T-cell (primary cell): ENCODE measurements at regions of chr3 and their contacts with region 1.

Region 1: DNA sequence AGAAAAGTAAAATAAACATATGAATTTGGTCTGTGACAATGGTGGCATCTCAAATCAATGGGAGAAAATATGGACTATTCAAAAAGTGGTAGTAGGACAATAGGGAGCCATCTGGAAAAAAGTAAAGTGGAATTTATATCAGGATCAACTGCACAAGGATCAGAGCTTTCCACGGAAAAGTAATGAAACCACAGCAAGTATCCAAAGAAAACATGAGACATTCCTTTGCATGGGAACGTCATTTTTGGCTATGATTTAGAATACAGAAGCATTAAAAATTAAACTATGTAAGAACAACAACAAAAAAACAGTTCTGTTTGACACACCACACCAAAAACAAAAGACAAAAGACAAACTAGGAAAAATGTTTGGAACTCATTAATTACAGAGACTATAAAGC is 18.7 kb downstream of the CRBN start:
- DNase-seq: no peak
- ATAC-seq: no peak
- H3K4me3 ChIP-seq: no peak overlapping the region
- H3K4me3 Mint-ChIP-seq: no peak overlapping the region
- H3K27ac ChIP-seq: no peak overlapping the region
- H3K27ac Mint-ChIP-seq: peak overlapping the region; percentile 70 to 83
- H3K4me1 ChIP-seq: peaks cover 0 to 6% of the 10 kb centered on the region in 2 experiments
- H3K4me1 Mint-ChIP-seq: peaks cover 73 to 78% (median 75%) of the 10 kb centered on the region in 3 donors
- H3K27me3 ChIP-seq: no peaks in the 10 kb centered on the region
- H3K27me3 Mint-ChIP-seq: no peaks in the 10 kb centered on the region

Region 2: DNA sequence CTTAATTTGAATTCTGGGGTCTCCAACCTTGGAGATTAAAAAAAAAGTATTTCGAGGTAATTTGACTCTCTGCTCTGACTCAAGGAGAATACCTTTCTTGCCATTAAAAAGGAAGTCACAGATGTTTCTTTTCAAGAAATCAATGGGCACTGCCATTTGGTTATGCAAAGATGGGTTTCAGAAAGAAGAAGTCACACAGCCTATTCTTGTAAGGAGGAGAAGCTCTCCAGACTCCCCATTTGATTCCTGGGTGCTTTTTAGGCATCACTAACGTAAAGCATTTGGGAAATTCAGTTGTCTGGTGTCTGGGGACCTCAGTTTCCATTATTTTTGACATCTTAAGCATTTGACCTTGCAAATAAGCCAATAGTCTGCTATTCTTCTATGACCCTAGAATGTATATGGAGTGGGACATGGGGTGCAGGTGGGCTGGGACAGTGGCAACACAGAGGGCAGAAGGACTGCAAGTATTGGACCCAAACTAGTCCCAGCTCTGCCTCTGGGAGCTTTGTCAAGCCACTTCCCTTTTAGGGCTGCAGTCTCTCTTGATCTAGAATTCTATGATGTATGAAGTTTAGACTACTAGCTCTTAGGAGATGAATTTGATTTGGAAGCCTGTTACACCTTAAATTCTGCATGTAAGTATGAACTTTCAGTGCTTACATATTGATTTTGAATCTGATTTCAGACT is 78.4 kb before region 1 on chr3:
- CTCF ChIA-PET with region 1: no interaction called
- POLR2A ChIA-PET with region 1: no interaction called
- DNase-seq: no peak
- ATAC-seq: no peak
- H3K4me3 ChIP-seq: no peak overlapping the region
- H3K4me3 Mint-ChIP-seq: no peak overlapping the region
- H3K27ac ChIP-seq: no peak overlapping the region
- H3K27ac Mint-ChIP-seq: no peak overlapping the region
- H3K4me1 ChIP-seq: no peaks in the 10 kb centered on the region
- H3K4me1 Mint-ChIP-seq: no peaks in the 10 kb centered on the region
- H3K27me3 ChIP-seq: no peaks in the 10 kb centered on the region
- H3K27me3 Mint-ChIP-seq: peaks cover 2 to 4% of the 10 kb centered on the region in 2 donors

Region 3: DNA sequence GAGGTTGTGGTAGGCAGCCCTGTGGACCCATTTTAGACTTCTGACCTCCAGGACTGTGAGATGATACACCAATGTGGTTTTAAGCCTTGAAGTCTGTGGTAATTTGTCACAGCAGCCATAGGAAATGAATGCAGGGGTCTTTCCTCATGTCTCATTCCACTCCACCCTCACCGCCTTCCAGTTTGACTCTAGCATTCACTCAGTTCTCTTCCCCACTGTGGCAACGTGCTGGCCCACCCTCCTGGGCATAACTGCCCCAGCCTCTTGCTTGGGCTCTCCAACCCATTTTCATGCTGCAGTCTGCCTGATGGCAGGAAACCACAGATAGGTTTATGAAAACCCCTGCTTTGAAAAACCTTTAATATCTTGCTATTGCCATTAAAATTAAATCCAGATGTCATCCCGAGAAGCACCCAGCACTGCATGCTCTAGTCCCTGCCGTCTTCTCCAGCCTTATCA is 41.4 kb before region 1 on chr3:
- CTCF ChIA-PET with region 1: no interaction called
- POLR2A ChIA-PET with region 1: interaction called in 1 of 2 experiments, 12 read pairs
- DNase-seq: no peak
- ATAC-seq: no peak
- H3K4me3 ChIP-seq: no peak overlapping the region
- H3K4me3 Mint-ChIP-seq: no peak overlapping the region
- H3K27ac ChIP-seq: no peak overlapping the region
- H3K27ac Mint-ChIP-seq: peak overlapping the region in 1 of 2 donors; percentile 62
- H3K4me1 ChIP-seq: peaks cover 0 to 5% of the 10 kb centered on the region in 2 experiments
- H3K4me1 Mint-ChIP-seq: peaks cover 0 to 4% (median 0%) of the 10 kb centered on the region in 3 donors
- H3K27me3 ChIP-seq: peaks cover 0 to 2% of the 10 kb centered on the region in 2 experiments
- H3K27me3 Mint-ChIP-seq: peaks cover 0 to 4% of the 10 kb centered on the region in 2 donors